ENCODE measurements at regions of chr13 and their contacts with region 1.

Region 1: GRCh38 chr13:35720690-35721554 is 244.4 kb upstream of the MAB21L1 start:
- DNase-seq: peak; percentile 89
- H3K4me3 ChIP-seq: peak overlapping the region; percentile 26 to 35; a peak in 3 of 4 replicates
- H3K27ac ChIP-seq: peak overlapping the region in 1 of 2 experiments; percentile 50; a peak in 1 of 4 replicates
- H3K4me1 ChIP-seq: peaks cover 0 to 37% of the 10 kb centered on the region in 2 experiments; a peak in 3 of 4 replicates
- H3K27me3 ChIP-seq: no peaks in the 10 kb centered on the region
- CTCF ChIP-seq: peak; percentile 98
- EP300 ChIP-seq: no peak
- RAD21 ChIP-seq: peak; percentile 98

Region 2: DNA sequence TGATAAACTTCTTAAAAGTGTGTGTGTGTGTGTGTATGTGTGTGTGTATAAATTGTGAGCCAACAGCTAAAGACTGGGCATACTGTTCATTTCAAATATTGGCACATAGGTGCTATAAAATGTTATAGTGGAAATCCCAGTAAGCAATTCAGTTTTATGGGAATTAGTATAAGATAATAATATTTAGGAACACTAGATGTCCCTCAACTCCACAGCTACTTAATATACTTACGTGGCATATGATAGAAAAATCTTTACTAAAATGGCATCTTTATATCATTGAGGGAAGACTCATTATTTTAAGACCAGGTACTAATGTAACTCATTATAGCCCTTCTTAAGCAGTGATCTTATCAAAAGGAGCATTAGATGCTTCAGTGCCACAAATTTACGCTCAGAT is 510.7 kb before region 1 on chr13:
- CTCF ChIA-PET with region 1: interaction called, 17 read pairs
- POLR2A ChIA-PET with region 1: no interaction called
- DNase-seq: peak; percentile 3
- H3K4me3 ChIP-seq: no peak overlapping the region
- H3K27ac ChIP-seq: peak overlapping the region in 1 of 2 experiments; percentile 28; a peak in 1 of 4 replicates
- H3K4me1 ChIP-seq: no peaks in the 10 kb centered on the region; a peak in 1 of 4 replicates
- H3K27me3 ChIP-seq: no peaks in the 10 kb centered on the region
- CTCF ChIP-seq: peak; percentile 43
- EP300 ChIP-seq: no peak
- RAD21 ChIP-seq: peak; percentile 77

Region 3: GRCh38 chr13:35818633-35819067 is 97.7 kb after region 1 on chr13:
- CTCF ChIA-PET with region 1: interaction called, 10 read pairs
- POLR2A ChIA-PET with region 1: no interaction called
- DNase-seq: peak; percentile 51
- H3K4me3 ChIP-seq: no peak overlapping the region; a peak in 1 of 4 replicates
- H3K27ac ChIP-seq: no peak overlapping the region
- H3K4me1 ChIP-seq: peaks cover 0 to 8% of the 10 kb centered on the region in 2 experiments; a peak in 1 of 4 replicates
- H3K27me3 ChIP-seq: no peaks in the 10 kb centered on the region
- CTCF ChIP-seq: peak; percentile 85
- EP300 ChIP-seq: no peak
- RAD21 ChIP-seq: peak; percentile 85

Region 4: GRCh38 chr13:35953537-35954206 is 232.8 kb after region 1 on chr13:
- CTCF ChIA-PET with region 1: interaction called, 26 read pairs
- POLR2A ChIA-PET with region 1: interaction called, 3 read pairs
- DNase-seq: peak; percentile 74
- H3K4me3 ChIP-seq: peak overlapping the region; percentile 32 to 42
- H3K27ac ChIP-seq: peak overlapping the region; percentile 43 to 83; a peak in 3 of 4 replicates
- H3K4me1 ChIP-seq: peaks cover 0 to 7% of the 10 kb centered on the region in 2 experiments; a peak in 3 of 4 replicates
- H3K27me3 ChIP-seq: no peaks in the 10 kb centered on the region
- CTCF ChIP-seq: peak; percentile 90
- EP300 ChIP-seq: peak in 1 of 2 experiments; percentile 51; a peak in 2 of 4 replicates
- RAD21 ChIP-seq: peak; percentile 95